A549 (cell line): ENCODE measurements at regions of chr11 and their contacts with region 1.

Region 1: DNA sequence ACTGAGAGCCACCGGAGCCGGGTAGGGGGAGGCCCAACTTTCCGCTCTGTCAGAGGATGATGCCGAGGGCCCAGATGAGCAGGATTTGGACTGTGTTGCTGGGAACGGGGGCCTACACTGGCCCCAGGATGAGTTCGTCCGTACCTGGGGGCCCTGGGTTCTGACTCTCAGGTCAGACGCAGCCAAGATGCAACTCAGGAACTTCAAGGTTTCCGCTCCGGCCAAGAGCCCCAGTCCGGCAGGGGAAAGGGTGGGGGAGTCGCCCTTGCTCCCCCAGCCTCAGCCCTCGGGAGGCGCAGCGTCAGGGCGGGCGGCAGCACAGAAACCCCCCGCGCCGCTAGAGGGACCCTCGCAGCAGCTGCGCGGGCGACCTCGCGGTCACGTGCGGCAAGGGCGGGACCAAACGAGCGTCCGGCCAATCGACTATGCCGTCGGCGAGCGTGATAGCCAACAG is 241 bp upstream of the ARL2 start:
- DNase-seq: peak in 1 of 2 experiments; percentile 94
- ATAC-seq: peak; percentile 90 to 92
- H3K4me3 ChIP-seq: peak overlapping the region; percentile 65
- H3K27ac ChIP-seq: peak overlapping the region; percentile 95 to 97
- H3K4me1 ChIP-seq: peaks cover 26% of the 10 kb centered on the region
- CTCF ChIP-seq: no peak; the same call in 1 of the 3 replicates
- EP300 ChIP-seq: no peak
- POLR2A ChIP-seq: peak; percentile 41
- RAD21 ChIP-seq: no peak; a peak in 2 of 5 replicates

Region 2: DNA sequence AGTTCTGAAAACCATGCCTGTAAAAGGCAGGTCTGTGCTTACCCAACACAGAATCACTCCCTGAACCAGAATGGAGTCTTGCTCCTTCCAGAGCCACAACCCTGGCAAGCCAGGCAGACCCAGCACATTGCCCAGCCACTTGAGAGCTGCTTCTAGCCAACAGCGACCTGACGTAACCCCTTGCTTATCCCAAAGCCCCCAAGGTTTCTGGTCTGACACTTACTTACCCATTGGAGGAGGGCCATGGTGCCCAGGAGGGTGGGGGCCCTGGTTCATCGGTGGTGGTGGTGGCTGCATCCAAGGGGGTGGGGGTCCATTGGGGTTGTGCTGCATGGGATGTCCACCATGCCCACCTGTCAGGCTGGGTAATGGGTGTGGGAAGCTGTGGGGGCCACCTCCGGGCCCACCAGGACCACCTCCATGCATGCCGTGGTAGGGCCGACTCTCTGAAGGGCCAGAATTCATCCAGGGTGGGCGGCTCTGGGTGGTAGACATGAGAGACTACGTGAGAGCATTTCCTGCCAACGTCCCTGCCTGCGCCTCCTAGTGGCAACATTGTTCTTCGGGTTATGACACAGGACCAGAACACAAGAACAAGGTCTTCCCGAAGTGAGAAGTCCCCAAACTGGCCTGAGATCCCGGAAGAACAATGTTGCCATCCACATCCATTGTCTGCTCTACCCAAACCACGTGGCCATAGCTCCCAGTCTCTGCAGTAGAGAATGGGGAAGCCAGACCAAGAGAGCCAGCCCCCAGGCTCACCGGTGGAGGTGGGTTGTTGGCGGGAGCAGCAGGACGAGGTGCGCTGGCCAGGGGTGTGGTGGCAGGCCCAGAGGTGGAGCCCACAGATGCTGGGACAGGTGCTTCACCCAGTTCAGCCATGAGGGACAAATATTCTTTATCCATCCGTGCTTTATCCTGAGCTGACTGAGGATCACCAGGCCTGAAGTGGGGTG is 246.1 kb before region 1 on chr11:
- CTCF ChIA-PET with region 1: no interaction called
- POLR2A ChIA-PET with region 1: no interaction called
- DNase-seq: peak in 1 of 2 experiments; percentile 82
- ATAC-seq: peak; percentile 66 to 79; a peak in 5 of 6 replicates
- H3K4me3 ChIP-seq: no peak overlapping the region
- H3K27ac ChIP-seq: no peak overlapping the region
- H3K4me1 ChIP-seq: peaks cover 10% of the 10 kb centered on the region; the same call in 2 of the 3 replicates
- CTCF ChIP-seq: peak; percentile 74
- EP300 ChIP-seq: no peak
- POLR2A ChIP-seq: no peak
- RAD21 ChIP-seq: 0 out of 5 replicates have a peak, but pooled peaks of 1 of the 2 experiments have one; percentile 14

Region 3: GRCh38 chr11:64846998-64847666 is 166.6 kb before region 1 on chr11:
- CTCF ChIA-PET with region 1: interaction called, 60 read pairs
- POLR2A ChIA-PET with region 1: interaction called, 4 read pairs
- DNase-seq: peak; percentile 93 to 95
- ATAC-seq: peak; percentile 69 to 86
- H3K4me3 ChIP-seq: no peak overlapping the region
- H3K27ac ChIP-seq: peak overlapping the region; percentile 57 to 92
- H3K4me1 ChIP-seq: peaks cover 74% of the 10 kb centered on the region
- CTCF ChIP-seq: peak; percentile 98
- EP300 ChIP-seq: no peak
- POLR2A ChIP-seq: no peak
- RAD21 ChIP-seq: peak; percentile 99

Region 4: GRCh38 chr11:64887757-64888405 is 125.8 kb before region 1 on chr11:
- CTCF ChIA-PET with region 1: interaction called, 24 read pairs
- POLR2A ChIA-PET with region 1: no interaction called
- DNase-seq: peak; percentile 66 to 80
- ATAC-seq: peak; percentile 50 to 76
- H3K4me3 ChIP-seq: peak overlapping the region; percentile 7; the same call in 1 of the 3 replicates
- H3K27ac ChIP-seq: peak overlapping the region; percentile 92 to 97
- H3K4me1 ChIP-seq: peaks cover 74% of the 10 kb centered on the region
- CTCF ChIP-seq: peak; percentile 95
- EP300 ChIP-seq: no peak
- POLR2A ChIP-seq: peak; percentile 30
- RAD21 ChIP-seq: peak; percentile 43 to 60

Region 5: GRCh38 chr11:64924102-64924851 is 89.4 kb before region 1 on chr11 and contains the start of gene PPP2R5B:
- CTCF ChIA-PET with region 1: interaction called, 13 read pairs
- POLR2A ChIA-PET with region 1: no interaction called
- DNase-seq: peak; percentile 93 to 99
- ATAC-seq: peak; percentile 96 to 97
- H3K4me3 ChIP-seq: peak within 1 kb of the TSS; percentile 71
- H3K27ac ChIP-seq: peak within 1 kb of the TSS; percentile 93 to 96
- H3K4me1 ChIP-seq: peaks cover 14% of the 10 kb centered on the region
- CTCF ChIP-seq: no peak
- EP300 ChIP-seq: no peak
- POLR2A ChIP-seq: peak; percentile 55
- RAD21 ChIP-seq: 0 out of 5 replicates have a peak, but pooled peaks of 1 of the 2 experiments have one; percentile 4
- polyA plus RNA-seq, gene PPP2R5B: 6.9 and 11.1 TPM in 2 replicates

Region 6: GRCh38 chr11:65003282-65003681 is 10.4 kb before region 1 on chr11:
- CTCF ChIA-PET with region 1: interaction called, 47 read pairs
- POLR2A ChIA-PET with region 1: no interaction called
- DNase-seq: no peak
- ATAC-seq: no peak
- H3K4me3 ChIP-seq: no peak overlapping the region
- H3K27ac ChIP-seq: no peak overlapping the region
- H3K4me1 ChIP-seq: peaks cover 34% of the 10 kb centered on the region
- CTCF ChIP-seq: no peak
- EP300 ChIP-seq: no peak
- POLR2A ChIP-seq: no peak
- RAD21 ChIP-seq: no peak

Region 7: GRCh38 chr11:65078151-65078550 is 64.4 kb after region 1 on chr11:
- CTCF ChIA-PET with region 1: interaction called, 35 read pairs
- POLR2A ChIA-PET with region 1: no interaction called
- DNase-seq: peak; percentile 69 to 77
- ATAC-seq: peak; percentile 91 to 92
- H3K4me3 ChIP-seq: no peak overlapping the region
- H3K27ac ChIP-seq: peak overlapping the region in 1 of 2 experiments; percentile 22; a peak in 1 of 6 replicates
- H3K4me1 ChIP-seq: peaks cover 29% of the 10 kb centered on the region
- CTCF ChIP-seq: peak; percentile 47
- EP300 ChIP-seq: no peak
- POLR2A ChIP-seq: no peak
- RAD21 ChIP-seq: peak; percentile 41 to 48; a peak in 3 of 5 replicates